Left ventricle myocardium superior (tissue), 1 donor: ENCODE measurements at regions of chr19 and their contacts with region 1.

Region 1: GRCh38 chr19:12777217-12778016 is 2.1 kb upstream of the HOOK2 start:
- DNase-seq: peak; percentile 90
- ATAC-seq: peak; percentile 44

Region 2: DNA sequence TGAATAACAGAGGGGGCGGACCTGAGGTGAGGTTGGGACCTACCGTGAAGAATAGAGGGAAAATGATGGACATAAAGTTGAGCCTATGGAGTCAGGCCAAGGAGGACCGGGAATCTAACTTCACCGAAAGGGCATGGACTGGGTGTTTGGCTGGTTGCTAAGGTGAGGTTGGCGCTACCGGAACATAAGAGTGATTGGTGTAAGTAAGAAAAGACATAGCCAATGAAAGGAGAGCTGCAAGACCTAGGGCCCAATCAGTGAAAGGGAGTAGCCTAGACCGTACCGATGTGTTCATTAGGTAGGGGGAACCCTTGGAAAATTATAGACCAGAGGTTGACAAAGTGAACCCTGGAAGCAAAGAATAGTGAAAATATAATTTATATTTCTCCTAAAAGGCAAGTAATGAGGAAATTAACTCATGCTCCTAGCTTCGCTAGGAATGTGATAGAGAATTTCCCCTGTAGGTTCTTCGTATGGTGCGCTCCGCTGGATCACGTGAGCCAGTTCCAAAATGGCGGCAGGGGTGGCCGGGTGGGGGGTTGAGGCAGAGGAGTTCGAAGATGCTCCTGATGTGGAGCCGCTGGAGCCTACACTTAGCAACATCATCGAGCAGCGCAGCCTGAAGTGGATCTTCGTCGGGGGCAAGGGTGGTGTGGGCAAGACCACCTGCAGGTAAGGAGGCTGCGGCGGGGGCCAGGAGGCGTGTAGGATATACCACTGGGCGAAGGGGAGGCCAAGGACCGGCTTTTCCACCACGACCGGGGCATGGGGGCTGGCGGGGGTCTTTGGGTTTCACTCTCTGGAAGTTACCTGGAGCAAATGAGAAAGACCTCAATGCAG is 40.2 kb before region 1 on chr19 and contains the start of gene GET3:
- intact Hi-C with region 1: no loop called
- DNase-seq: peak; percentile 88
- ATAC-seq: peak; percentile 87
- total RNA-seq, gene GET3: 64.7 TPM

Region 3: GRCh38 chr19:12793290-12794199 is 16.1 kb after region 1 on chr19:
- intact Hi-C with region 1: loop called (anchors 2 kb)
- DNase-seq: peak; percentile 97
- ATAC-seq: peak; percentile 55

Region 4: DNA sequence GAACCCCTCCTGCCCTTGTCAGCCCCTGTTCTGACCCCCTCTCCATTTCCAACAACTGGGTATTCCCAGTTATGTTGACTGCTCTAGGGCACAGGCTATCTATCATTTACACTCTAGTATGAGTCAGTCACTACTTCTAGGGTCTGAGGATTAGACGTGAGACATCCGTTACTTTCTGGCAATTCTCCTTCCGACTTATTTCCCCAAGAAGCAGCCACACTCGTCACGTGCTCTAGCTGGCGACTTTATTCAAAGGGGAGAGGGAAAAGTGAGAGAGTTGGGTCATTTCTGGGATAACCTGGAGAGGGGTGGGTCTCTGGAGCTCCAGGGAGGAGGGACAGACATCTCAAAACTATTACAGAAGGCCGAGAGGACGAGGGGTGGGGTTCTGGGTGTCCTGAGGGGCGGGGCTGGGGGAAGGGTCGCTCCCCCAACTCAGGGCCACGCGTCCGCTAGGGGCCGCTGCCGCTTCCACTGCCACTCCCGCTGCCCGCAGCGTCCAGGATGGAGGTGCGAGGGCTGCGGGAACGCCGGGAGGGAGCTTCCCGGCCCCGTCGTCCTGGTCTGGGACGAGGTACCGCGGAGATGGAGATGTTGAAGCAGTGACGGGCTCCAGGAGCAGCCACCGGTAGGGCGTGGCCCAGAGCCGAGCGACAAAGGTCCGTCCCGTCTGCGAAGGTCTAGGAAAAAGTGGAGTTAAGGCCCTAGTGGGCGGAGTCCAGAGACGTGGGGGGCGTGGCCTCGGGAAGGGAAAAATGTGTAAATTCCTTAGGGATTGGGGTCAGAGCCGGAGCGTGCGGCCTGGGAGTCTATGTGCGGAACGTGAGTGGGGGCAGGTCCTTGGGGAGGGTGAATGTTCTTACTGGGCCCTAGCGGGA is 48.1 kb after region 1 on chr19:
- intact Hi-C with region 1: no loop called
- DNase-seq: no peak
- ATAC-seq: no peak